ENCODE measurements at regions of chrX and their contacts with region 1.

Region 1: DNA sequence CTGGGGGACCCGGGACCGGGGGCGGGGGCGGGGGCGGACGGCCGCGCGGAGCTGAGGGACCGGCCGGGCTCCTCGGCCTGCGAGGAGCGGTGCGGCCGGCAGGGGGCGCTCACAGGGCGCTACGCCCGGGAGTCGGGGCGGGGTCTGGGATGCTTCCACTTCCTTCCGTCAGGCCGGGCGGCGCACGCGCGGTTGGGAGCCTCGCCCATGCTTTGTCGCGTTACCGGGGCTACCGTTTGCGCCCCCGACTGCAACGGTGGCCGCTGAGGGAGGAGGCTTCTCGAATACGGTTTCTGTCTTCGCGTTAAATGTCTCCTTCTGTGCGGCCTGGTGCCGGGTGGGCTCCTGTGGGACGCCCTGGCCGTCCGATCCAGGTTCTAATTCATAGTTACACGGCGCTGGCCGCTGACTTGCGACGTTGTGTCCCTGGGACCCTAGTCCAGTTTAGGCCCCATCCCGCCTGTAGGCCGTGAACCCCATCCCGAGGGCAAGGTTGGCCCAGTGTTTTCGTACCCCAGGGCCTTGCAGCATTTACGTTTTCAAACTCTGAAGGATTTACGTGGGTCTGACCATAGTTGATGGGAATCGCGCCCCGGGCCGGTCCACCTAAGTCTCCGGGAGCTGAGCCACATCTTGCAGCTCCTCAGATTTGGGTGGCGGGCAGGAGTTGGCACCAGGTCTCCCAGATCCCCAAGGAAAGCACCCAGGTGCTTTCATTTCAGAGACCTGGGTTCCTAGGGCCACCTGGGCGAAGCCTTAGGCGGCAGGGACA is 549 bp downstream of the MSL3 start:
- DNase-seq: peak; percentile 80 to 93
- ATAC-seq: peak; percentile 70 to 89 (median 76)
- H3K4me3 ChIP-seq: peak overlapping the region; percentile 96
- H3K4me3 Mint-ChIP-seq: peak overlapping the region; percentile 91
- H3K27ac ChIP-seq: peak overlapping the region; percentile 86
- H3K27ac Mint-ChIP-seq: peak overlapping the region; percentile 91 to 95
- H3K4me1 ChIP-seq: peaks cover 14% of the 10 kb centered on the region
- H3K4me1 Mint-ChIP-seq: peaks cover 15 to 23% of the 10 kb centered on the region in 2 donors
- H3K27me3 ChIP-seq: no peaks in the 10 kb centered on the region
- H3K27me3 Mint-ChIP-seq: peaks cover 3 to 4% of the 10 kb centered on the region in 2 donors
- CTCF ChIP-seq: peak; percentile 72

Region 2: GRCh38 chrX:11111038-11111851 is 647.3 kb before region 1 on chrX and contains the start of gene HCCS:
- intact Hi-C with region 1: loop called (anchors 1 kb)
- DNase-seq: peak; percentile 77 to 91
- ATAC-seq: peak; percentile 87 to 93 (median 89)
- H3K4me3 ChIP-seq: peak within 1 kb of the TSS; percentile 66
- H3K4me3 Mint-ChIP-seq: peak within 1 kb of the TSS; percentile 89
- H3K27ac ChIP-seq: peak within 1 kb of the TSS; percentile 94
- H3K27ac Mint-ChIP-seq: peak within 1 kb of the TSS; percentile 84 to 97
- H3K4me1 ChIP-seq: peaks cover 14% of the 10 kb centered on the region
- H3K4me1 Mint-ChIP-seq: peaks cover 5 to 23% of the 10 kb centered on the region in 2 donors
- H3K27me3 ChIP-seq: no peaks in the 10 kb centered on the region
- H3K27me3 Mint-ChIP-seq: no peaks in the 10 kb centered on the region
- CTCF ChIP-seq: no peak
- total RNA-seq, gene HCCS: 6.4 to 9.0 (median 7.1) TPM

Measured in natural killer cell (primary cell).